WTC11 (cell line): ENCODE measurements at regions of chr1 and their contacts with region 1.

Region 1: DNA sequence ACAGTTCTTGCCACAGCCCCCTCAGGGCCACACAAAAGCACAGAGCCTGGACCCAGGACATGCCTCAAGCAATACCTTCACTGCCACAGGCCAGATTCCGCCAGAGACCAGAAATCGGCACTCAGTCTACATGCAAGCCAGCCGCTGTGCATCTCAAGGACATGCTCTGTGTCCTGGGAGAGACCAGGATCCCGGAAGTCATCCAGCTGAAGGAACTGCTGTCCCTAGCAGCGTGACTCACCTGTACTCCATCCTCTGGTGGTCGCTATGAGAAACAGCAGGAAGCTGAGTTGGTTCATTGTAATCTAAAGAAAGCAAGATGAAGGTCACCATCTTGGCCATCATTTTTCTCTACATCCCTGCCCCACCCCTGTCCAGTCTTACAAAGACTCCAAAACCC is 401 bp downstream of the ITLN1 start:
- DNase-seq: no peak
- ATAC-seq: peak; percentile 95
- H3K4me3 Mint-ChIP-seq: no peak overlapping the region
- H3K27ac Mint-ChIP-seq: no peak overlapping the region
- H3K4me1 Mint-ChIP-seq: 0 out of 2 replicates have a peak, but pooled peaks cover 2% of the 10 kb centered on the region
- H3K27me3 Mint-ChIP-seq: no peaks in the 10 kb centered on the region; the same call in 1 of the 2 replicates
- CTCF ChIP-seq: no peak

Region 2: GRCh38 chr1:160837558-160838205 is 46.9 kb before region 1 on chr1:
- CTCF ChIA-PET with region 1: interaction called, 10 read pairs
- POLR2A ChIA-PET with region 1: no interaction called
- DNase-seq: no peak
- ATAC-seq: peak; percentile 46; the same call in 1 of the 2 replicates
- H3K4me3 Mint-ChIP-seq: no peak overlapping the region
- H3K27ac Mint-ChIP-seq: no peak overlapping the region
- H3K4me1 Mint-ChIP-seq: peaks cover 21% of the 10 kb centered on the region
- H3K27me3 Mint-ChIP-seq: no peaks in the 10 kb centered on the region; the same call in 1 of the 2 replicates
- CTCF ChIP-seq: no peak

Region 3: GRCh38 chr1:161059293-161059692 is 174.7 kb after region 1 on chr1:
- CTCF ChIA-PET with region 1: no interaction called
- POLR2A ChIA-PET with region 1: no interaction called
- DNase-seq: no peak
- ATAC-seq: no peak
- H3K4me3 Mint-ChIP-seq: no peak overlapping the region
- H3K27ac Mint-ChIP-seq: no peak overlapping the region
- H3K4me1 Mint-ChIP-seq: peaks cover 15% of the 10 kb centered on the region
- H3K27me3 Mint-ChIP-seq: no peaks in the 10 kb centered on the region
- CTCF ChIP-seq: no peak